ENCODE measurements at regions of chr1 and their contacts with region 1.

Region 1: GRCh38 chr1:167617153-167618147 is 12.6 kb upstream of the RCSD1 start:
- DNase-seq: peak; percentile 34
- H3K4me3 ChIP-seq: no peak overlapping the region
- H3K27ac ChIP-seq: no peak overlapping the region
- H3K4me1 ChIP-seq: no peaks in the 10 kb centered on the region
- H3K27me3 ChIP-seq: no peaks in the 10 kb centered on the region
- CTCF ChIP-seq: no peak
- POLR2A ChIP-seq: no peak

Region 2: DNA sequence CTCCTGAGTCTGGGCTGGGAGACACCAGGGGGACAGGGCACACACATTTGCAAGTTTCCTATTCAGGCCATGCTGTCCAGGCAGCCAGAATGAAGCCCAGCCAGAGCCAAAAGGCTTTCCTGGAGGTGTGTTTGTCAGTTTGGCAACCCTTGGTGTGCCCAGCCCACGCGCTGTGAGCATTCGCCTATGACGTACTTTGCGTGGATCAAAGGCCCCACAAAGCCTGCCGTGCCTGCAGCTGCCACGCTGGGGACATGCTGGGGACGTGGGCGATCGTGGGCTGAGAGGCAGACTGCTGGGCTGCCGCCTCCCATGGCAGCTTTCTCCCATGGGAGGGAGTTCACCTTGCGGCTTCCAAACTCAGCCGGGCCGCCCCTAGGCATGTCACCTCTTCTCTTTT is 156.6 kb before region 1 on chr1:
- CTCF ChIA-PET with region 1: no interaction called
- POLR2A ChIA-PET with region 1: no interaction called
- dilution Hi-C with region 1: no loop called
- intact Hi-C with region 1: no loop called
- DNase-seq: no peak
- H3K4me3 ChIP-seq: no peak overlapping the region
- H3K27ac ChIP-seq: no peak overlapping the region
- H3K4me1 ChIP-seq: no peaks in the 10 kb centered on the region
- H3K27me3 ChIP-seq: peaks cover 12 to 21% of the 10 kb centered on the region in 2 experiments
- CTCF ChIP-seq: no peak
- POLR2A ChIP-seq: no peak

Region 3: DNA sequence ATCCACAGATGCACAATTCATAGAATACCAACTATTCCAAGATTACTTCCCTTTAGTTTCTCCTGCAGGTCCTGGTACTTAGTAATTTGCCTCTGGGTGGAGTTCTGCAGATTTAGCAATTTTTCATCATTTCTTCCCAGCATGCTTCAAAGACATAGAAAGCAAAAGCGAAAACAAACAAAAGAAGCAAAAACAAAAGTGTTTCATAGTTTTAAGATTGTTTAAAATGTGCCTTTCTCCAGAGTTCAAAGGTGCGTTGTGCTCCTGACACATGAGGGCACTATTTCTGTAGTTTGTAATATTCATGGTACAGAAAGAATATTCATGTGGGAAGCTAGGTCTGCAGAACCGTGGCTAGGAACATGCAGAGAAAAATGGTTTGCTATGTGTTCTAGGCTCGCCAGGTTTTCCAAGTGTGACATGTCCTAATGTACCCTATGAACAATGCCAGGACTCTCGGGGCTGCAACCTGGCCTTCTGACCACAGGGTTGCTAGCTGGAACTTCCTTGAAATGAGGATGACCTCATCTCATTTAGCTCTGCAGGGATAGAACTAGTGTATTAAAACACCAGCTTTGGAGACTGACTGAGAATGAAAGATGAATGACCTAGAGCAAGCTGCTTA is 17.4 kb before region 1 on chr1:
- CTCF ChIA-PET with region 1: no interaction called
- POLR2A ChIA-PET with region 1: no interaction called
- dilution Hi-C with region 1: no loop called
- intact Hi-C with region 1: no loop called
- DNase-seq: peak; percentile 40
- H3K4me3 ChIP-seq: no peak overlapping the region
- H3K27ac ChIP-seq: no peak overlapping the region
- H3K4me1 ChIP-seq: no peaks in the 10 kb centered on the region
- H3K27me3 ChIP-seq: no peaks in the 10 kb centered on the region
- CTCF ChIP-seq: peak in 1 of 2 donors; percentile 29
- POLR2A ChIP-seq: no peak

Region 4: GRCh38 chr1:167661527-167662426 is 44.3 kb after region 1 on chr1:
- CTCF ChIA-PET with region 1: no interaction called
- POLR2A ChIA-PET with region 1: no interaction called
- dilution Hi-C with region 1: no loop called
- intact Hi-C with region 1: loop called (anchors 5 kb)
- DNase-seq: peak; percentile 22
- H3K4me3 ChIP-seq: no peak overlapping the region
- H3K27ac ChIP-seq: no peak overlapping the region
- H3K4me1 ChIP-seq: peaks cover 5% of the 10 kb centered on the region
- H3K27me3 ChIP-seq: peaks cover 0 to 5% of the 10 kb centered on the region in 2 experiments
- CTCF ChIP-seq: no peak
- POLR2A ChIP-seq: no peak

Region 5: GRCh38 chr1:167763525-167764220 is 146.2 kb after region 1 on chr1:
- CTCF ChIA-PET with region 1: no interaction called
- POLR2A ChIA-PET with region 1: no interaction called
- dilution Hi-C with region 1: no loop called
- intact Hi-C with region 1: no loop called
- DNase-seq: no peak
- H3K4me3 ChIP-seq: no peak overlapping the region
- H3K27ac ChIP-seq: no peak overlapping the region
- H3K4me1 ChIP-seq: no peaks in the 10 kb centered on the region
- H3K27me3 ChIP-seq: no peaks in the 10 kb centered on the region
- CTCF ChIP-seq: no peak
- POLR2A ChIP-seq: no peak

Measured in endothelial cell of umbilical vein (primary cell).